A673 (cell line): ENCODE measurements at regions of chr4 and their contacts with region 1.

Region 1: DNA sequence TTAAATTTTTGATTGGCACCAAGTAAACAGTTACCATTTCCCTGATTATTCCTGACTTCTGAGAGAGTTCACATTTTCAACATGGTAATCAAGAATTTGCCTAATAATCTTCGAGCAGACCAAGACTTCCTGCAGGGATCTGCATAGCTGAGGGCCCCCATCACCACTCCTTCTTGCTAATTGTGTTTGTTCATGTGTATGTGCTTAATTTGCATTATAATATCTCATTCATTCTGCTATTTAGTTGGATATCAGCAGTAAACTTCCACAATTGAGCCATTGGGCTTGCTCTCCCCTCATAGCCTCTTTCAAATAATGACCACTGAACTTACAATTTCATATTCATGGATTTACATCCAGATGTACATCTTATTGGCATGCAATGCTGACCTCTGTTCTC is 292.5 kb downstream of the SPATA18 start:
- DNase-seq: no peak
- H3K4me3 ChIP-seq: no peak overlapping the region
- H3K27ac ChIP-seq: no peak overlapping the region
- H3K4me1 ChIP-seq: no peaks in the 10 kb centered on the region
- H3K27me3 ChIP-seq: no peaks in the 10 kb centered on the region
- CTCF ChIP-seq: no peak

Region 2: GRCh38 chr4:52234561-52235440 is 108.8 kb before region 1 on chr4:
- CTCF ChIA-PET with region 1: no interaction called
- POLR2A ChIA-PET with region 1: no interaction called
- intact Hi-C with region 1: no loop called
- DNase-seq: peak; percentile 48
- H3K4me3 ChIP-seq: no peak overlapping the region
- H3K27ac ChIP-seq: no peak overlapping the region
- H3K4me1 ChIP-seq: no peaks in the 10 kb centered on the region
- H3K27me3 ChIP-seq: no peaks in the 10 kb centered on the region
- CTCF ChIP-seq: peak; percentile 57

Region 3: GRCh38 chr4:52329894-52330293 is 13.7 kb before region 1 on chr4:
- CTCF ChIA-PET with region 1: no interaction called
- POLR2A ChIA-PET with region 1: no interaction called
- intact Hi-C with region 1: loop called (anchors 1 kb)
- DNase-seq: no peak
- H3K4me3 ChIP-seq: no peak overlapping the region
- H3K27ac ChIP-seq: no peak overlapping the region
- H3K4me1 ChIP-seq: no peaks in the 10 kb centered on the region
- H3K27me3 ChIP-seq: no peaks in the 10 kb centered on the region
- CTCF ChIP-seq: no peak

Region 4: GRCh38 chr4:53734584-53735353 is 1391.2 kb after region 1 on chr4:
- CTCF ChIA-PET with region 1: no interaction called
- POLR2A ChIA-PET with region 1: no interaction called
- intact Hi-C with region 1: no loop called
- DNase-seq: no peak
- H3K4me3 ChIP-seq: no peak overlapping the region
- H3K27ac ChIP-seq: no peak overlapping the region
- H3K4me1 ChIP-seq: no peaks in the 10 kb centered on the region
- H3K27me3 ChIP-seq: no peaks in the 10 kb centered on the region
- CTCF ChIP-seq: no peak